ENCODE measurements at regions of chr4 and their contacts with region 1.

Region 1: GRCh38 chr4:77819843-77820648 is 878 bp upstream of the CNOT6L start:
- DNase-seq: peak; percentile 91 to 98 (median 96)
- ATAC-seq: peak; percentile 73
- H3K4me3 ChIP-seq: peak overlapping the region; percentile 60
- H3K4me3 Mint-ChIP-seq: peak overlapping the region; percentile 97
- H3K27ac ChIP-seq: peak overlapping the region; percentile 86 to 98
- H3K27ac Mint-ChIP-seq: peak overlapping the region; percentile 96
- H3K4me1 ChIP-seq: peaks cover 43% of the 10 kb centered on the region
- H3K4me1 Mint-ChIP-seq: peaks cover 71% of the 10 kb centered on the region
- H3K27me3 ChIP-seq: no peaks in the 10 kb centered on the region
- H3K27me3 Mint-ChIP-seq: peaks cover 4% of the 10 kb centered on the region
- CTCF ChIP-seq: no peak

Region 2: DNA sequence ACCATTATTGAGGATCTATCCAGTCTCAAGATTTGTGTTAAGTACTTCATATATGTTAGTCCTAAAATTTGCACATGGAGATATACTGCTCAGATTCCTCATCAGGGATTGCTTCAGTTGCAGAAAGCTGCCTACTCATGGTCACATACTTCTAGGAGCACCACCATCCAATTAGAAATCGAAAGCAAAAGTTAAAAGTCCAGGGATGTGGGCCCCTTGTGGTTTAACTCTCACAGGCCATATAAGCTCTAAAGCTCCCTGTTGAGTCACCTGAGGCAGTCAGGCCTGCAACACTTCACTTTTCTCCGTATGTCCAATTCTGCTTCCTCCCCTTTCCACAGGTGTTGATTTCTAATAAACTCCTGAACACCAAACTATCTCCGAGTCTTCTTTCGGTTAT is 85.1 kb before region 1 on chr4:
- CTCF ChIA-PET with region 1: no interaction called
- POLR2A ChIA-PET with region 1: interaction called, 6 read pairs
- intact Hi-C with region 1: loop called in 1 of 2 experiments (anchors 5 kb)
- DNase-seq: peak in 5 of 14 experiments; percentile 4 to 81 (median 62)
- ATAC-seq: peak; percentile 71
- H3K4me3 ChIP-seq: no peak overlapping the region
- H3K4me3 Mint-ChIP-seq: peak overlapping the region; percentile 61
- H3K27ac ChIP-seq: no peak overlapping the region
- H3K27ac Mint-ChIP-seq: peak overlapping the region; percentile 78
- H3K4me1 ChIP-seq: peaks cover 5% of the 10 kb centered on the region
- H3K4me1 Mint-ChIP-seq: peaks cover 82% of the 10 kb centered on the region
- H3K27me3 ChIP-seq: no peaks in the 10 kb centered on the region
- H3K27me3 Mint-ChIP-seq: no peaks in the 10 kb centered on the region
- CTCF ChIP-seq: no peak

Region 3: DNA sequence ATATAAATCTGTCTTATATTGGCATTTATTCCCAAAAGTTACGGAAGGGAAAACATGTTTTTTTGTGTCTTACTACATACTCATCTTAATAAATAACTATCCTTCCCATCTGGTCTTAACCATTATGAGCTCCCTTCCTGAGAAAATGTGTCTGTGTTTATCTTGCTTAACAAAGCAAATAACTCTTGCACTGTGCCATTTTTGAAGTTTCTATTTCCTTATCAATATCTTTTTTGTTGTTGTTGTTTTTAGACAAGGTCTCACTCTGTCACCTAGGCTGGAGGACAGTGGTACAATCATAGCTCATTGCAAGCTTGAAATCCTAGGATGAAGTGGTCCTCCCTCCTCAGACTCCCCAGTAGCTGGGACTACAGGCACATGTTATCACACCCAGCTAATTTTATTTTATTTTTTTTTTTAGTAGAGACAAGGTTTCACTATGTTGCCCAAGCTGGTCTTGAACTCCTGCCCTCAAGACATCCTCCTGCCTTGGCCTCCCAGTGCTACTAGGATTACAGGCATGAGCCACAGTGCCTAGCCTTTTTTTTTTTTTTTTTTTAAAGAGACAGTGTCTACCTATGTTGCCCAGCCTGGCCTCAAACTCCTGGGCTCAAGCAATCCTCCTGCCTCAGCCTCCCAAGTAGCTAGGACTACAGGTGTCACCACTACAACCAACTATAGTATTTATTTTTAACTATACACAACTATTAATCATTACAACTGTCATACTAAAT is 37.8 kb before region 1 on chr4:
- CTCF ChIA-PET with region 1: interaction called, 3 read pairs
- POLR2A ChIA-PET with region 1: interaction called, 35 read pairs
- intact Hi-C with region 1: loop called (anchors 5 kb)
- DNase-seq: no peak
- ATAC-seq: no peak
- H3K4me3 ChIP-seq: no peak overlapping the region
- H3K4me3 Mint-ChIP-seq: peak overlapping the region; percentile 28
- H3K27ac ChIP-seq: no peak overlapping the region
- H3K27ac Mint-ChIP-seq: peak overlapping the region; percentile 8
- H3K4me1 ChIP-seq: peaks cover 35% of the 10 kb centered on the region
- H3K4me1 Mint-ChIP-seq: peaks cover 81% of the 10 kb centered on the region
- H3K27me3 ChIP-seq: no peaks in the 10 kb centered on the region
- H3K27me3 Mint-ChIP-seq: no peaks in the 10 kb centered on the region
- CTCF ChIP-seq: no peak

Region 4: GRCh38 chr4:77805802-77806201 is 14.2 kb before region 1 on chr4:
- CTCF ChIA-PET with region 1: interaction called, 5 read pairs
- POLR2A ChIA-PET with region 1: interaction called, 53 read pairs
- intact Hi-C with region 1: loop called (anchors 1 to 2 kb)
- DNase-seq: no peak
- ATAC-seq: no peak
- H3K4me3 ChIP-seq: no peak overlapping the region
- H3K4me3 Mint-ChIP-seq: peak overlapping the region; percentile 48
- H3K27ac ChIP-seq: no peak overlapping the region
- H3K27ac Mint-ChIP-seq: peak overlapping the region; percentile 32
- H3K4me1 ChIP-seq: peaks cover 10% of the 10 kb centered on the region
- H3K4me1 Mint-ChIP-seq: peaks cover 87% of the 10 kb centered on the region
- H3K27me3 ChIP-seq: no peaks in the 10 kb centered on the region
- H3K27me3 Mint-ChIP-seq: no peaks in the 10 kb centered on the region
- CTCF ChIP-seq: no peak

Region 5: GRCh38 chr4:77852892-77853495 is 32.9 kb after region 1 on chr4:
- CTCF ChIA-PET with region 1: interaction called, 11 read pairs
- POLR2A ChIA-PET with region 1: interaction called, 1,450 read pairs
- intact Hi-C with region 1: loop called in 1 of 2 experiments (anchors 1 kb)
- DNase-seq: peak; percentile 42 to 92 (median 56)
- ATAC-seq: peak; percentile 83
- H3K4me3 ChIP-seq: peak overlapping the region; percentile 31
- H3K4me3 Mint-ChIP-seq: peak overlapping the region; percentile 74
- H3K27ac ChIP-seq: peak overlapping the region; percentile 58 to 94
- H3K27ac Mint-ChIP-seq: peak overlapping the region; percentile 95
- H3K4me1 ChIP-seq: peaks cover 40% of the 10 kb centered on the region
- H3K4me1 Mint-ChIP-seq: peaks cover 53% of the 10 kb centered on the region
- H3K27me3 ChIP-seq: no peaks in the 10 kb centered on the region
- H3K27me3 Mint-ChIP-seq: no peaks in the 10 kb centered on the region
- CTCF ChIP-seq: no peak